CD8-positive, alpha-beta T cell (primary cell): ENCODE measurements at regions of chr7 and their contacts with region 1.

Region 1: GRCh38 chr7:106071356-106071998 is 40.6 kb downstream of the SYPL1 start:
- DNase-seq: peak in 8 of 9 experiments; percentile 22 to 81 (median 50)
- ATAC-seq: peak; percentile 92
- H3K4me3 ChIP-seq: peak overlapping the region; percentile 28 to 31
- H3K4me3 Mint-ChIP-seq: peak overlapping the region; percentile 78
- H3K27ac ChIP-seq: peak overlapping the region; percentile 64 to 83
- H3K27ac Mint-ChIP-seq: peak overlapping the region; percentile 97
- H3K4me1 ChIP-seq: peaks cover 37% of the 10 kb centered on the region
- H3K4me1 Mint-ChIP-seq: peaks cover 67% of the 10 kb centered on the region
- H3K27me3 ChIP-seq: no peaks in the 10 kb centered on the region
- H3K27me3 Mint-ChIP-seq: no peaks in the 10 kb centered on the region
- CTCF ChIP-seq: no peak

Region 2: DNA sequence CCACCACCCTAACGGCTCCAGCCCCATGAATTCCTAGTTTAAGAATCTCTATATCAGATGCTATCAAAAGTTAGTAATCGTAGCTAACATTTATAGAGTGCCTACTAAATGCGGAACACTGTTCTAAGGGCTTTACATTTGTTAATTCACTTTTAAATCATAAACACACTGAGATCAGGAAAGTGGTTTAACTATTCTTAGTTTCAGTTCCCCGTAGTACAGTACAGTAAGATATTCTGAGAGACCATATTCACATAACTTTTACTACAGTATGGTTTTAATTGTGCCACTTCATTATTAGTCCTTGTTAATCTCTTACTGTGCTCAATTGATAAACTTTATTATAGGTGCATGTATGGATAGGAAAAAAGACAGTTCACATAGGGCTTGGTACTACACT is 18.2 kb after region 1 on chr7:
- CTCF ChIA-PET with region 1: interaction called, 3 read pairs
- POLR2A ChIA-PET with region 1: interaction called, 5 read pairs
- intact Hi-C with region 1: loop called (anchors 2 kb)
- DNase-seq: no peak
- ATAC-seq: no peak
- H3K4me3 ChIP-seq: no peak overlapping the region
- H3K4me3 Mint-ChIP-seq: no peak overlapping the region
- H3K27ac ChIP-seq: no peak overlapping the region
- H3K27ac Mint-ChIP-seq: no peak overlapping the region
- H3K4me1 ChIP-seq: no peaks in the 10 kb centered on the region
- H3K4me1 Mint-ChIP-seq: peaks cover 4% of the 10 kb centered on the region
- H3K27me3 ChIP-seq: no peaks in the 10 kb centered on the region
- H3K27me3 Mint-ChIP-seq: no peaks in the 10 kb centered on the region
- CTCF ChIP-seq: no peak

Region 3: DNA sequence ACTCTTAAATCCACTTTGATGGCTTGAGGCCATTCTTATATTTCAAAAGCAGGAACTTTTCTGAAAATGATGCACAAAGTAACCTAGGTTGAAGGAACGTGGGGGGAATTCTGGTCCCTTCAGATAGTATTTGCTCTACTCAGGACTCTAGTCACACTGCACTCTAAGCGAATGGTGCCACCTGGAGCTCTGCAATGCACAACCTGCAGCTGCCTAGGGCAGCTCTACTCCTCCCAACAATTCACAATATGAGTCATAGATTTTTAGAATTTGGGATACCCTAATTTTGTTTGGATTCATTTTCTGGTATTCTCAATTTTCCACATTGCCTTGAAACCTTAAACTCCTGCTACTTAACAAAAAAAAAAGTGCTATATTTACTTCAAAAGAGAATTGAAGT is 23.3 kb after region 1 on chr7:
- CTCF ChIA-PET with region 1: interaction called, 3 read pairs
- POLR2A ChIA-PET with region 1: interaction called, 3 read pairs
- intact Hi-C with region 1: loop called (anchors 2 kb)
- DNase-seq: no peak
- ATAC-seq: no peak
- H3K4me3 ChIP-seq: no peak overlapping the region
- H3K4me3 Mint-ChIP-seq: no peak overlapping the region
- H3K27ac ChIP-seq: no peak overlapping the region
- H3K27ac Mint-ChIP-seq: no peak overlapping the region
- H3K4me1 ChIP-seq: no peaks in the 10 kb centered on the region
- H3K4me1 Mint-ChIP-seq: peaks cover 11% of the 10 kb centered on the region
- H3K27me3 ChIP-seq: no peaks in the 10 kb centered on the region
- H3K27me3 Mint-ChIP-seq: no peaks in the 10 kb centered on the region
- CTCF ChIP-seq: no peak

Region 4: GRCh38 chr7:106223156-106223555 is 151.7 kb after region 1 on chr7:
- CTCF ChIA-PET with region 1: no interaction called
- POLR2A ChIA-PET with region 1: no interaction called
- intact Hi-C with region 1: no loop called
- DNase-seq: no peak
- ATAC-seq: no peak
- H3K4me3 ChIP-seq: no peak overlapping the region
- H3K4me3 Mint-ChIP-seq: no peak overlapping the region
- H3K27ac ChIP-seq: no peak overlapping the region
- H3K27ac Mint-ChIP-seq: no peak overlapping the region
- H3K4me1 ChIP-seq: no peaks in the 10 kb centered on the region
- H3K4me1 Mint-ChIP-seq: peaks cover 3% of the 10 kb centered on the region
- H3K27me3 ChIP-seq: peaks cover 0 to 4% of the 10 kb centered on the region in 2 experiments
- H3K27me3 Mint-ChIP-seq: peaks cover 2% of the 10 kb centered on the region
- CTCF ChIP-seq: no peak

Region 5: DNA sequence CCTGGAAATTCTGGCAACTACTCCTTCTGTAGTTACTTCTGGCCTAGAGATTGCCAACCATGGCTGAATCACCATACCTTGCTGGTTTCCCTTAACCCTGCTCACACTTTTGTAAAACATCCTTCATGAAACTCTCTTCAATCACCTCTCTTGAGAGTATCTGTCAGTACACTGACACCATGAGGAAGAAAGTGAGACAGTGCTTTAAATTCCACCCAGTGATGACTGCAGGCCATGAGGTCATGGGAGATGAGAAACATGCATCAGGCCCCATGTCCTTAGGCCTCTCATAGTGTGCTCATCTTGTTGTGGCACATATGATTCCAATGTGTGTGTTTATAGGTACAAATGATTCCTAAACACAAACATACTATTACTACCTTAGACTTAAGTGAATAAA is 237.9 kb after region 1 on chr7:
- CTCF ChIA-PET with region 1: no interaction called
- POLR2A ChIA-PET with region 1: no interaction called
- intact Hi-C with region 1: no loop called
- DNase-seq: peak in 2 of 9 experiments; percentile 4 to 11
- ATAC-seq: no peak
- H3K4me3 ChIP-seq: no peak overlapping the region
- H3K4me3 Mint-ChIP-seq: no peak overlapping the region
- H3K27ac ChIP-seq: no peak overlapping the region
- H3K27ac Mint-ChIP-seq: no peak overlapping the region
- H3K4me1 ChIP-seq: no peaks in the 10 kb centered on the region
- H3K4me1 Mint-ChIP-seq: no peaks in the 10 kb centered on the region
- H3K27me3 ChIP-seq: no peaks in the 10 kb centered on the region
- H3K27me3 Mint-ChIP-seq: peaks cover 11% of the 10 kb centered on the region
- CTCF ChIP-seq: no peak